ENCODE measurements at regions of chr7 and their contacts with region 1.

Region 1: GRCh38 chr7:86939197-86939814 is 120.1 kb downstream of the ELAPOR2 start:
- DNase-seq: peak; percentile 21 to 29
- H3K4me3 ChIP-seq: no peak overlapping the region
- H3K27ac ChIP-seq: no peak overlapping the region
- H3K4me1 ChIP-seq: no peaks in the 10 kb centered on the region
- H3K27me3 ChIP-seq: no peaks in the 10 kb centered on the region
- CTCF ChIP-seq: peak; percentile 23 to 87 (median 66)
- POLR2A ChIP-seq: no peak

Region 2: DNA sequence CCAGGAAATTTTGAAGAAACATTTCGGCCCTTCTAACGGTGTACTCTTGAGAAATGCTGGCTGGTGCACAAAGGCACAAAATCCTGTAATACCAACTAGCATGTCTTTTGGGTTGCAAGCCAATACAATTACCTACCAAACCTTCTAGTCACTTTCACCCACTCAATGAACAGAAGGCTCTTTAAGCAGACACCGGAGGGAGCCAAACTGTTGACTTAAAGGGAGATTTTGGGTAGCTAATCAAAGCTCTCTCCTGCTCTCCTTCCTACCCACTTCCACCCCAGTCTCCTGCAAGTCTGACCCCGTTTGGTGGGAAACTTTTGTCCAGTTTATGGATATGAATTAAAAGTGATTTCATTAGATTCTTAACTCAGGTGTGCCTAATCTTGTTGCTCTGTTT is 271.6 kb before region 1 on chr7:
- intact Hi-C with region 1: no loop called
- DNase-seq: no peak
- H3K4me3 ChIP-seq: no peak overlapping the region
- H3K27ac ChIP-seq: no peak overlapping the region
- H3K4me1 ChIP-seq: no peaks in the 10 kb centered on the region
- H3K27me3 ChIP-seq: no peaks in the 10 kb centered on the region
- CTCF ChIP-seq: no peak
- POLR2A ChIP-seq: no peak

Region 3: DNA sequence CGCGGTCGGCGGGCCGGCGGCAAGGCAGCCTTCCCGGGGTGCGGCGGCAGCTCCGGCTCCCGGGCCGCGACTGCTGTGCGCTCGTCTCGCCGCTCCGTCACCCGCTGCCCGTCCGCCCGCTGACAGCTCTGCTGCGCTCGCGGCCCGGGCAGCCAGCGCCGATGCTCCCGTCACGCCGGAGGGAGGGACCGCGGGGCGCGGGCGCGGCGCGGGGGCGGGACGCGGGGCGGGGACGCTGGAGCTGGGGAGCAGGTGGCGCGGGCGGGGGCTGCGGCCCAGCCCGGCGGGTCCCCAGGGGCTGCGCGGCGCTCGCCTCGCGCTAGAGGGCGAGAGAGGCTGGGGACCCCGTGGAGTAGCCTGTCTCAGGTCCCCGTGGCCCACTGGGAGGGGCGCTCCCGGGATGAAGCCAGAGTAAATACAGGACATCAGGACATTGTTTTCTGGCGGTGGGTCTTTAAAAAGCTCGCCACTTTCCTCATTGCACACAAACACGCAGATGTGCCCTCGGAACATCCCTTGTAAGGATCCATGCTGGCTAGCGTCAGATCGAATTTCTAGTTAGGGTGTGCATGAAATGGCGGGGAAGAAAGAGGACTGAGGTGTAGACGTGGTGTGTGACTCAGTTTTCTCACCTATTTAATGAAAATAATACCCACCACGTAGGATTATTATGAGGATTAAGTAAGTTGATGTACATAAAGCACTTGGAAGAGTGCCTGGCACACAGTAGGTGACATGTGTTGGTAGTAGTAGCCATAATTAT is 120.4 kb after region 1 on chr7 and contains the start of gene ELAPOR2:
- intact Hi-C with region 1: loop called (anchors 10 kb)
- DNase-seq: peak; percentile 84
- H3K4me3 ChIP-seq: peak within 1 kb of the TSS; percentile 15 to 56 (median 24)
- H3K27ac ChIP-seq: peak within 1 kb of the TSS; percentile 6 to 75 (median 59)
- H3K4me1 ChIP-seq: peaks cover 3 to 5% of the 10 kb centered on the region in 2 donors
- H3K27me3 ChIP-seq: no peaks in the 10 kb centered on the region
- CTCF ChIP-seq: peak in 4 of 6 experiments; percentile 30 to 69 (median 54)
- POLR2A ChIP-seq: peak in 1 of 2 donors; percentile 86
- total RNA-seq, gene ELAPOR2: 25.4 to 31.3 (median 25.7) TPM

Region 4: DNA sequence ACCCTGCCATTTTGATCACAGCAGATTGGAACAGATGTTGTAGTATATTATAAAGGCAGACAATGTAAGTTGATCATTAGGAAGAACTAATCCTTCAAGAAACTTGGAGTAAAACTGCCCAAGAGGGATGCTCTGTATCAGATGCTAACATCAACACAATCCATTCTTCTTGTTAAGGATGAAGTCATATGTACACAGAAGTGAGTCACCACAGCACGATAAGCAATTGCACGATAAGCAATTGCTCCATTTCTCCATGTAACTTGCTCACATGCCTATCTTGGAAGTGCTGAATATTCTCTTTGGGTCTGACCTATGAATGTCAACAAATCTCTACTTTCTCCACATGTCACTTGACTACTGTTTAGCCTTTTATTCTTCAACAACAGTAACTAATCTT is 171.5 kb after region 1 on chr7:
- intact Hi-C with region 1: no loop called
- DNase-seq: no peak
- H3K4me3 ChIP-seq: no peak overlapping the region
- H3K27ac ChIP-seq: no peak overlapping the region
- H3K4me1 ChIP-seq: no peaks in the 10 kb centered on the region
- H3K27me3 ChIP-seq: no peaks in the 10 kb centered on the region
- CTCF ChIP-seq: no peak
- POLR2A ChIP-seq: no peak

Region 5: GRCh38 chr7:87152107-87152844 is 213.0 kb after region 1 on chr7 and contains the start of gene DMTF1:
- intact Hi-C with region 1: loop called (anchors 5 kb)
- DNase-seq: peak; percentile 95
- H3K4me3 ChIP-seq: peak within 1 kb of the TSS; percentile 35 to 90 (median 52)
- H3K27ac ChIP-seq: peak within 1 kb of the TSS; percentile 96 to 99 (median 99)
- H3K4me1 ChIP-seq: peaks cover 42 to 47% of the 10 kb centered on the region in 2 donors
- H3K27me3 ChIP-seq: no peaks in the 10 kb centered on the region
- CTCF ChIP-seq: peak in 2 of 6 experiments; percentile 7 to 23
- POLR2A ChIP-seq: peak in 1 of 2 donors; percentile 87
- total RNA-seq, gene DMTF1: 125 to 174 (median 146) TPM

Region 6: GRCh38 chr7:87206361-87206760 is 267.1 kb after region 1 on chr7:
- intact Hi-C with region 1: no loop called
- DNase-seq: no peak
- H3K4me3 ChIP-seq: no peak overlapping the region
- H3K27ac ChIP-seq: no peak overlapping the region
- H3K4me1 ChIP-seq: peaks cover 13 to 35% of the 10 kb centered on the region in 2 donors
- H3K27me3 ChIP-seq: no peaks in the 10 kb centered on the region
- CTCF ChIP-seq: no peak
- POLR2A ChIP-seq: no peak

Measured in thyroid gland (tissue), 4 donors.